ENCODE measurements at regions of chr10 and their contacts with region 1.

Region 1: GRCh38 chr10:77907900-77908717 is 18.4 kb downstream of the DLG5 start:
- DNase-seq: no peak
- H3K4me3 ChIP-seq: no peak overlapping the region
- H3K27ac ChIP-seq: no peak overlapping the region
- H3K4me1 ChIP-seq: peaks cover 27% of the 10 kb centered on the region
- H3K27me3 ChIP-seq: no peaks in the 10 kb centered on the region
- CTCF ChIP-seq: peak; percentile 47

Region 2: GRCh38 chr10:76432274-76433012 is 1475.7 kb before region 1 on chr10:
- CTCF ChIA-PET with region 1: no interaction called
- POLR2A ChIA-PET with region 1: no interaction called
- intact Hi-C with region 1: no loop called
- DNase-seq: peak; percentile 60 to 79
- H3K4me3 ChIP-seq: peak overlapping the region; percentile 30; the same call in 1 of the 2 replicates
- H3K27ac ChIP-seq: peak overlapping the region; percentile 80
- H3K4me1 ChIP-seq: peaks cover 40% of the 10 kb centered on the region
- H3K27me3 ChIP-seq: no peaks in the 10 kb centered on the region
- CTCF ChIP-seq: no peak

Region 3: GRCh38 chr10:77770081-77770867 is 137.8 kb before region 1 on chr10:
- CTCF ChIA-PET with region 1: no interaction called
- POLR2A ChIA-PET with region 1: interaction called, 12 read pairs
- intact Hi-C with region 1: no loop called
- DNase-seq: no peak
- H3K4me3 ChIP-seq: no peak overlapping the region
- H3K27ac ChIP-seq: no peak overlapping the region
- H3K4me1 ChIP-seq: no peaks in the 10 kb centered on the region
- H3K27me3 ChIP-seq: no peaks in the 10 kb centered on the region
- CTCF ChIP-seq: no peak

Region 4: DNA sequence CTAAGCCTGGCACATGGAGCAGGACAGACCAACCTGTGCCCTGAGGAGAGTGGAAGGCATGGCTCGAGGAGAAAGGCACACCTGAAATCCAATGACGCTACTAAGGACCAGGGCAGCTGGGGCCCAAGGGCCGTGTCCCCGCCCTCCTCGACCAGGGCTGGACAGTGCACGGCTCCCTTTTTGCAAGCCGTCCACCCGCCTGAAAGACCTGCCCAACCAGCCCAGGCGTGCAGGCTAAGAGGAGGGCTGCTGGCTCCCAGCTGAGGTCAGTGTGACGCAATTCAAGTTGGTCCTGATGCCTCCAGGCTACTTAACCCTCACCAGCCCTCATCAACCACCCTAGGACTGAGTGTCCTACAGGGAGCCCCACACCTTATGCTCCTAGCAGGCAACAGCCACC is 50.9 kb before region 1 on chr10:
- CTCF ChIA-PET with region 1: no interaction called
- POLR2A ChIA-PET with region 1: no interaction called
- intact Hi-C with region 1: loop called (anchors 2 kb)
- DNase-seq: peak; percentile 92
- H3K4me3 ChIP-seq: no peak overlapping the region
- H3K27ac ChIP-seq: no peak overlapping the region
- H3K4me1 ChIP-seq: peaks cover 62% of the 10 kb centered on the region
- H3K27me3 ChIP-seq: no peaks in the 10 kb centered on the region
- CTCF ChIP-seq: no peak

Region 5: GRCh38 chr10:77873536-77874380 is 34.4 kb before region 1 on chr10:
- CTCF ChIA-PET with region 1: interaction called, 7 read pairs
- POLR2A ChIA-PET with region 1: interaction called, 4 read pairs
- intact Hi-C with region 1: loop called (anchors 1 kb)
- DNase-seq: peak; percentile 92 to 93
- H3K4me3 ChIP-seq: peak overlapping the region; percentile 2; the same call in 1 of the 2 replicates
- H3K27ac ChIP-seq: peak overlapping the region; percentile 89
- H3K4me1 ChIP-seq: peaks cover 35% of the 10 kb centered on the region
- H3K27me3 ChIP-seq: no peaks in the 10 kb centered on the region
- CTCF ChIP-seq: no peak

Region 6: DNA sequence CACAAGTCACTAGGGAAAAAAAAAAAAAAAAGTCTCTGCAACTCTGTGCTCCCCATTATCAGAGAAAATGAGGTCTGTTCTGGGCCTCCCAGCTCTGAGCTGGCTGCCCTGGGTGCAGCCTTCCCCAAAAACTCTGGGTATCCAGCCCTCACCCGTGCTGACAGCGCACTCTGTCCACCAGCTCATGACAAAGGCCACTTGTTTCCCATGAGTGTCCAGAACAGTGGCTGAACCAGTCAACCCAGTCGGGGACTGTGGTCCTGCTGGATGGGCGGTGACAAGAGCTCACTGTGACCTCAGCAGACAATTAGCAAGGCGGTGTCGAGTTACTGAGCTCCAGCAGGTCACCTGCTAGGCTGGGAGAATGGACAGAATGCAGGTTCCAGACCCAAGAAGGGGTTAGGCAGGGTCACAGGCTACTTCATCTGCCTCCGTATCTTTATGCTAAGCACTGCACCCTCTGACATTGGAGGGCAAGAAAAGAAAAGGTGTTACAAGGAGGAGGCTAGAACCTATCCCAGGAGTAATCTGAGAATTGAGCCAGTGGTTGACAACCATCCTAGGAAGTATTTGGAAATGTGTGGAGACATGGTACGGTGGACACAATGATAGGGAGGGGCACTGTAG is 18.7 kb before region 1 on chr10:
- CTCF ChIA-PET with region 1: interaction called, 4 read pairs
- POLR2A ChIA-PET with region 1: no interaction called
- intact Hi-C with region 1: loop called (anchors 1 kb)
- DNase-seq: peak; percentile 93 to 97
- H3K4me3 ChIP-seq: no peak overlapping the region
- H3K27ac ChIP-seq: peak overlapping the region; percentile 73
- H3K4me1 ChIP-seq: peaks cover 34% of the 10 kb centered on the region
- H3K27me3 ChIP-seq: no peaks in the 10 kb centered on the region
- CTCF ChIP-seq: no peak

Region 7: DNA sequence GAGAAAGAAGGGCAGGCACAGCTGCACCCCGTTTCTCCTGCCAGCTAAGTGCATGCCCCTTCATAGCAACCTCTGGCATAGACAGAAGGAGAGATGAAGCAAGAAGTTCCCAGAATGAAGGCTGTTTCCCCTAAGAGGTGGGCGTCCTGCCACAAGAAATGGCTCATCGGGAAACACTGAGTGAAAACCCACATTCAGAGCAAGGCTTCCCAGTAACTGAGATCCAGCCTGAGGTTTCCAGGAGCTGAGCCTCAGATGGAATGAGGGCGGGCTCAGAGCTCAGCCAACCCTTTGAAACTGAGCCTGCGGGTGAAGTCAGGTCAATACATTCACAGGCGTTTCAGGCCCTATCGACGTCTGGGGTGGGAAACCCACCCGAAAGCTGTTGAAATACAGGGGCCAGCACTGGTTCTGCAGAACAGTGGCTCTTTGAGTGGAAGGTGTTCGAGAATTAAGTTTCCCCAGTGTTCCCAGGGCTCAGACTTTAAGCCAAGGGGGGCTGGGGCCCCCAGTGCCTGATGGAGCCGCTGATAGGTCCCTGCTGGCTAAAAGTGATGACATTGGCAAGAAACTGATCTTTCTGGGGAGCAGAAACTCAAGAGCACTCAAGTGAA is 635.7 kb after region 1 on chr10:
- CTCF ChIA-PET with region 1: no interaction called
- POLR2A ChIA-PET with region 1: no interaction called
- intact Hi-C with region 1: no loop called
- DNase-seq: no peak
- H3K4me3 ChIP-seq: no peak overlapping the region
- H3K27ac ChIP-seq: no peak overlapping the region
- H3K4me1 ChIP-seq: no peaks in the 10 kb centered on the region
- H3K27me3 ChIP-seq: peaks cover 10% of the 10 kb centered on the region; the same call in 1 of the 2 replicates
- CTCF ChIP-seq: no peak

Measured in PC-9 (cell line).